ENCODE measurements at regions of chr13 and their contacts with region 1.

Region 1: GRCh38 chr13:49278211-49278610 is 30.5 kb downstream of the CDADC1 start:
- DNase-seq: no peak
- ATAC-seq: no peak
- H3K4me3 ChIP-seq: no peak overlapping the region
- H3K27ac ChIP-seq: no peak overlapping the region
- H3K4me1 ChIP-seq: no peaks in the 10 kb centered on the region
- H3K27me3 ChIP-seq: no peaks in the 10 kb centered on the region
- CTCF ChIP-seq: no peak

Region 2: DNA sequence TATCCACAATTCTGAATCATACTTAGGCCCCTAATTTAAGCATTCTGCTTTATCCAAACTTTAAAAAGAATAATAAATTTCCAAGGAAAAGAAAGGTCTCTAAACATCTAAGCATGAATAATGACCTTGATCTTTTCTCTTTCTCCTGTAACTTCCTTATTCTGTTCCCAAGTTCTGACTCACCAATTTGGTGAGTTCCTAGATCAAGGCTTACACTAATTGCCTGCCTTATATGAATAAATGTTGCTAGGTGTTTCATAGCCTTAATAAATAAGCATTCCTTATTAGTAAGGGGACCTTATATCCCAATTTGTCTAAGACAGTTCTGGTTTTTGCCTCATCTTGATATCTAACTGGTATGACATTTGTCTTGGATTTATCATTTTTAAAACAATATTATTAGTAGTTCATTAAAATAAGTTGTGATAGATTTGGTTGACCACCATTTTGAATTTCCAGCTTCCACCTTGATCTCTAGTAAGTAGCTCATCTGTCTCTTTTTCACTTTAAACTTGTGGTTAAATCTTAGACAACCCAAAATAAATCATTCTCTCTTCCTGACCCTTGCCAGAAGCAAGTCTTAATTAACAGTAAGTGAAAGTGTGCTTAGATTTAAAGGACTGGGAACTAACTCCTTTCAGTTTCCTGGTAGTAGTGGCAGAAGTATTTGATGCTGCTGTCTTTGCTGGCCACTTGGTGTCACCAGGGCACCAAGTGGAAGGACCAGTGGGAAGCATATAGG is 179.3 kb before region 1 on chr13:
- intact Hi-C with region 1: loop called (anchors 2 to 5 kb)
- DNase-seq: no peak
- ATAC-seq: peak; percentile 33 to 80 (median 54)
- H3K4me3 ChIP-seq: no peak overlapping the region
- H3K27ac ChIP-seq: peak overlapping the region; percentile 83
- H3K4me1 ChIP-seq: peaks cover 25% of the 10 kb centered on the region
- H3K27me3 ChIP-seq: no peaks in the 10 kb centered on the region
- CTCF ChIP-seq: peak; percentile 40

Measured in psoas muscle (tissue), 8 donors.